HEK293 (cell line): ENCODE measurements at regions of chr7 and their contacts with region 1.

Region 1: DNA sequence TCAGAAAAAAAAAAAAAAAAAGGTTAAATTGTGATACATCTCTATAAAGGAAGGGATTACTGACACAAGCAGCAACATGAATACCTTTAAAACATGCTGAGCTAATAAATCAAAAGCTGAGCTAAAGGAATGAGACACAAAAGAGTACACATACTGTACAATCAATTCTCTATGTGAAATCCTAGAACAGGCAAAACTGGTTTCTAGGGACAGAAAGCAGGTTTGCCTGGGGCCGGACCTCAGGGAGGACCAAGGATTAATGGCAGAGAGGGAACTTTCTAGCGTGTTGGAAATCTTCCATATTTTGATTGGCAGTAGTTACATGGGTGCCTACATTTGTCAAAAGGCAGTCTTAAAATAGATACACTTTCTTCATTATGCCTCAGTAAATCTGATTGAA is 52.5 kb downstream of the KLRG2 start:
- H3K4me3 ChIP-seq: no peak overlapping the region
- H3K27ac ChIP-seq: no peak overlapping the region
- H3K4me1 ChIP-seq: no peaks in the 10 kb centered on the region
- CTCF ChIP-seq: no peak

Region 2: DNA sequence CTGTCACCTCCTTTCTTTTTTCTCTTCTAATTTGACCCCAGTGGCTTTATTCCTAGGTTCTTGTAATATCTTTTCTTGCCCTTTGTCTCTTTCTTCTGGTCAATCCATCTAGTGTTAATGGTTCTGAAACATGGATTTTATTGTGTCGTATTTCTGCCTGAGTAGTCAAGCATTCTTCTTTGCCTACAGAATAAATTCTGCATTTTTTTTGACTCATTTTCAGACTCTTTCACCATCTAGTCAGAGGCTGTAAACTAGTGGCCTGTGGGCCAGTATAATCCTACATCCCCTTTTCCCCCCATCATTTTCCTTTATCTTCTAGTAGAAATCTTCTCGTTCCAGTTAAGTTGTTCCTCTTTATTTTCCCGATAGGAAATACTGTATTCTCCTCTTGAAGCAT is 41.9 kb before region 1 on chr7:
- CTCF ChIA-PET with region 1: interaction called, 10 read pairs
- POLR2A ChIA-PET with region 1: no interaction called
- H3K4me3 ChIP-seq: no peak overlapping the region
- H3K27ac ChIP-seq: no peak overlapping the region
- H3K4me1 ChIP-seq: no peaks in the 10 kb centered on the region
- CTCF ChIP-seq: no peak

Region 3: GRCh38 chr7:139416405-139416804 is 14.6 kb before region 1 on chr7:
- CTCF ChIA-PET with region 1: interaction called, 47 read pairs
- POLR2A ChIA-PET with region 1: no interaction called
- H3K4me3 ChIP-seq: no peak overlapping the region
- H3K27ac ChIP-seq: no peak overlapping the region
- H3K4me1 ChIP-seq: no peaks in the 10 kb centered on the region
- CTCF ChIP-seq: no peak

Region 4: DNA sequence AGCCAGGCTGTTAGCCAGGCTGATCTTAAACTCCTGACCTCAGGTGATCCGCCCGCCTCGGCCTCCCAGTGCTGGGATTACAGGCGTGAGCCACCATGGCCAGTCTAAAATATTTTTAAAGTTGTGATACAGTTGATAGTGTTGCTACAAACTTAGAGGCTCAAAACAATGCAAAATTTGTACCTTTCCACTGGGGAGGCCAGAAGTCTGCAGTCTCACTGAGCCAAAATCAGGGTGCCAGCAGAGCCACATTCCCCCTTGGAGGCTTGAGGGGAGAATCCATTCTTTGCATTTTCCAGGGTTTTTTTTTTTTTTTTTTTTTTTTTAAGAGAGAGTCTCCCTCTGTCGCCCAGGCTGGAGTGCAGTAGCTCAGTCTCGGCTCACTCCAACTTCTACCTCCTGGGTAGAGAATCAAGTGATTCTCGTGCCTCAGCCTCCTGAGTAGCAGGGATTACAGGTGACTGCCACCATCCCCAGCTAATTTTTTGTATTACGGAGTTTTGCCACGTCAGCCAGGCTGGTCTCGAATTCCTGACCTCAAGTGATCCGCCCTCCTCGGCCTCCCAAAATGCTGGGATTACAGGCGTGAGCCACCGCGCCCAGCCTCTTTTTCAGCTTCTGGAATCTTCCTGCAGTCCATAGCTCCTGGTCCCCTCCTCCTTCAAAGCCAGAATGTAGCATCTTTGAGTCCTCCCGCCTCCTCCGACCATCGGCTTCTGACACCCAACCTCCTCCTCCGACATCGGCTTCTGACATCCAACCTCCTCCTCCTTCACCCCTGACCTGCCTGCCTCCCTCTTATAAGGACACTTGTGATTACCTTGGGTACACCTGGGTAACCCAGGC is 15.2 kb after region 1 on chr7:
- CTCF ChIA-PET with region 1: interaction called, 32 read pairs
- POLR2A ChIA-PET with region 1: no interaction called
- H3K4me3 ChIP-seq: no peak overlapping the region
- H3K27ac ChIP-seq: no peak overlapping the region
- H3K4me1 ChIP-seq: no peaks in the 10 kb centered on the region
- CTCF ChIP-seq: no peak

Region 5: GRCh38 chr7:139505563-139505962 is 74.6 kb after region 1 on chr7:
- CTCF ChIA-PET with region 1: interaction called, 20 read pairs
- POLR2A ChIA-PET with region 1: no interaction called
- H3K4me3 ChIP-seq: no peak overlapping the region
- H3K27ac ChIP-seq: no peak overlapping the region
- H3K4me1 ChIP-seq: no peaks in the 10 kb centered on the region
- CTCF ChIP-seq: no peak